ENCODE measurements at regions of chr3 and their contacts with region 1.

Region 1: GRCh38 chr3:9749645-9750555 is at the start of gene OGG1:
- DNase-seq: peak; percentile 98
- total RNA-seq, gene OGG1: 9.6 TPM

Region 2: GRCh38 chr3:9485248-9485647 is 264.7 kb before region 1 on chr3:
- intact Hi-C with region 1: no loop called
- DNase-seq: no peak

Region 3: DNA sequence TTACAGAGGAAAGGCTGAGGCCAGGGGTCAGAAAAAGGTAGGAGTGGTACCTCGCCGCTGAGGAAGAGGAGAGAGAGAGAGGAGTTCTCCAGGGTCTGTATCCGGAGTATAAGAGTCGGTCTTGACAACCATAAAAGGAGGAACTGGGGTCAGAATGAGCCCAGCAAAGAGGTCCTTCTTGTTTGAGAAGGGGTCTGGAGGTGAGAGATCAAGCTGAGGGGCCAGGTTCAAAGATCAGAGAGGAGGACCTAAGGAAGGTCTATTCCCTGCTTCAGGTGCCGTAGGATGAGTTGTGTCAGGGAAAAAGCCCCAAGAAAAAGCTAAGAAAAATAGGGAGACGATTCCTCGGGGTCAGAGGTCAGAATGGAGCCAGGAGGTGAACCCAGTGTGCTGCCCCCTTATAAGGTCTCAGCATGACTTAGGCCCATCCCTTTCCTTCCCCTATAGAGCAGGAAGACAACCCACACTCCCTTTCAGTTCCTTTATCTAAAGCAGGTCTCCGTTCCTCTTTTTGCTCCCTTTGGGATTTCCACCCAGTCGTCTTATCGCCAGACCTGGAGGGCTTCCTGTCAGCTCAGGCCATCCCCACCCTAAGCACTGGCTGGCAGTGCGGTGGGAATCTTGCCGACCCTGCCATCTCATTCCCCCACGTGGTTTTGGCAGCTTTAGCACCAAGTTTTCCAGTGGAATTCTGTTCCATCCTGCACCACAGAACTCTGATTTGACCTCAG is 99.9 kb before region 1 on chr3:
- intact Hi-C with region 1: loop called (anchors 5 kb)
- DNase-seq: peak; percentile 63

Region 4: GRCh38 chr3:9669720-9670432 is 80.0 kb before region 1 on chr3:
- intact Hi-C with region 1: loop called (anchors 5 kb)
- DNase-seq: no peak

Region 5: GRCh38 chr3:9731206-9732079 is 18.5 kb before region 1 on chr3 and contains the start of gene BRPF1:
- intact Hi-C with region 1: loop called (anchors 1 kb)
- DNase-seq: peak; percentile 100
- total RNA-seq, gene BRPF1: 10.6 TPM

Region 6: GRCh38 chr3:9769426-9770275 is 19.8 kb after region 1 on chr3 and contains the start of gene CAMK1:
- intact Hi-C with region 1: loop called (anchors 2 kb)
- DNase-seq: peak; percentile 91
- total RNA-seq, gene CAMK1: 10.0 TPM

Region 7: GRCh38 chr3:9792405-9793160 is 42.7 kb after region 1 on chr3 and contains the starts of genes ARPC4 and TADA3:
- intact Hi-C with region 1: loop called (anchors 2 kb)
- DNase-seq: peak; percentile 97
- total RNA-seq, gene ARPC4: 79.8 TPM
- total RNA-seq, gene TADA3: 50.1 TPM

Region 8: GRCh38 chr3:9970020-9970687 is 220.3 kb after region 1 on chr3:
- intact Hi-C with region 1: no loop called
- DNase-seq: no peak

Measured in cardiac septum (tissue), 1 donor.